ENCODE measurements at regions of chr19 and their contacts with region 1.

Region 1: GRCh38 chr19:44845612-44846454 is at the start of gene NECTIN2:
- DNase-seq: peak; percentile 99 to 100 (median 100)
- ATAC-seq: peak; percentile 83 to 86 (median 86)
- H3K4me3 ChIP-seq: peak within 1 kb of the TSS; percentile 86 to 100 (median 99)
- H3K27ac ChIP-seq: peak within 1 kb of the TSS; percentile 94 to 100 (median 98)
- H3K4me1 ChIP-seq: peaks cover 15 to 56% (median 39%) of the 10 kb centered on the region in 12 donors
- H3K27me3 ChIP-seq: no peaks in the 10 kb centered on the region
- CTCF ChIP-seq: peak; percentile 39 to 86 (median 66)
- POLR2A ChIP-seq: peak; percentile 67 to 92
- total RNA-seq, gene NECTIN2: 37.0 to 99.6 (median 57.6) TPM

Region 2: DNA sequence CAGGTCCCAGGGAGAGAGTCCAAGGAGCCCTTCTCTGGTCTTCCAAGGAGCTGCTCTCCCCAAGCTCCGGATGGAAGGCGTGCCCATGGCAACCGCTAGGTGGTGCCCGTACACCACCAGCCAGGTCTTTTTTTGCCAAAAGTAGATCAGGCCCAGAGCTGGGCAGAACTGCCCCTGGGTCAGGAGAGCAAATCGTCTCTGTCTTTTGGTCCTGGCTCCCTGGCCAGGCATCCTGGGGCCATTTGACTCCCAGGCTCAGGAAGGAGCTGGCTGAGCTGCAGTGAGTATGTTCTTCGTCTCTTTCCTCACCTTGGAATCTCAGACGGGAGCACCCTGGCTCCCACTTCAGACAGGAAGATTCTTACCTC is 121.9 kb before region 1 on chr19:
- intact Hi-C with region 1: loop called in 2 of 10 experiments (anchors 2 to 10 kb)
- DNase-seq: peak; percentile 77 to 91 (median 86)
- ATAC-seq: peak; percentile 75 to 91 (median 90)
- H3K4me3 ChIP-seq: no peak overlapping the region
- H3K27ac ChIP-seq: peak overlapping the region in 6 of 12 donors; percentile 10 to 70 (median 35)
- H3K4me1 ChIP-seq: peaks cover 7 to 60% (median 29%) of the 10 kb centered on the region in 12 donors
- H3K27me3 ChIP-seq: no peaks in the 10 kb centered on the region
- CTCF ChIP-seq: peak; percentile 96 to 100 (median 98)
- POLR2A ChIP-seq: no peak

Region 3: DNA sequence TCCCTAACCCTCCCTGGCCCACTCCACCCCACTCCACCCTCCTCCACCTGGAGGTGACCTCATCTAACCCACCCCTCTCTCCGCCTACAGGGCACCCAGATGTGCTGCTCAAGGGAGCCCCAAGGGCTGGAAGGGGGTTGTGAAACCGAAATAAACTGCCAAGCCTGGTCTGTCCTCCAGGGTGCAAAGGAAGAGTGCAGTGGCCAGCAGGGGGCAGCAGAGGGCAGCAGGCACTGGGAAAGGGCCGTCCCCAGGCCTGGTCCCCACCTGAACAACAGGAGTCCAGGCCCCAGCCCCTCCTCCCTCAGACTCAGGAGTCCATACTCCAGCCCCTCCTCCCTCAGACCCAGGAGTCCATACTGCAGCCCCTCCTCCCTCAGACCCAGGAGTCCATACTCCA is 45.4 kb before region 1 on chr19:
- intact Hi-C with region 1: loop called in 9 of 10 experiments (anchors 1 to 2 kb)
- DNase-seq: peak; percentile 85 to 92 (median 88)
- ATAC-seq: peak; percentile 82 to 90 (median 88)
- H3K4me3 ChIP-seq: no peak overlapping the region
- H3K27ac ChIP-seq: no peak overlapping the region
- H3K4me1 ChIP-seq: peaks cover 0 to 23% (median 14%) of the 10 kb centered on the region in 12 donors
- H3K27me3 ChIP-seq: no peaks in the 10 kb centered on the region
- CTCF ChIP-seq: peak; percentile 86 to 96 (median 91)
- POLR2A ChIP-seq: no peak

Region 4: GRCh38 chr19:44820648-44821609 is 24.9 kb before region 1 on chr19:
- intact Hi-C with region 1: loop called in 1 of 10 experiments (anchors 1 kb)
- DNase-seq: peak; percentile 86 to 89 (median 88)
- ATAC-seq: peak; percentile 77 to 90 (median 86)
- H3K4me3 ChIP-seq: peak overlapping the region in 7 of 12 donors; percentile 20 to 48 (median 34)
- H3K27ac ChIP-seq: peak overlapping the region; percentile 46 to 95 (median 84)
- H3K4me1 ChIP-seq: peaks cover 0 to 37% (median 19%) of the 10 kb centered on the region in 12 donors
- H3K27me3 ChIP-seq: no peaks in the 10 kb centered on the region
- CTCF ChIP-seq: peak in 1 of 12 donors; percentile 20
- POLR2A ChIP-seq: no peak

Region 5: DNA sequence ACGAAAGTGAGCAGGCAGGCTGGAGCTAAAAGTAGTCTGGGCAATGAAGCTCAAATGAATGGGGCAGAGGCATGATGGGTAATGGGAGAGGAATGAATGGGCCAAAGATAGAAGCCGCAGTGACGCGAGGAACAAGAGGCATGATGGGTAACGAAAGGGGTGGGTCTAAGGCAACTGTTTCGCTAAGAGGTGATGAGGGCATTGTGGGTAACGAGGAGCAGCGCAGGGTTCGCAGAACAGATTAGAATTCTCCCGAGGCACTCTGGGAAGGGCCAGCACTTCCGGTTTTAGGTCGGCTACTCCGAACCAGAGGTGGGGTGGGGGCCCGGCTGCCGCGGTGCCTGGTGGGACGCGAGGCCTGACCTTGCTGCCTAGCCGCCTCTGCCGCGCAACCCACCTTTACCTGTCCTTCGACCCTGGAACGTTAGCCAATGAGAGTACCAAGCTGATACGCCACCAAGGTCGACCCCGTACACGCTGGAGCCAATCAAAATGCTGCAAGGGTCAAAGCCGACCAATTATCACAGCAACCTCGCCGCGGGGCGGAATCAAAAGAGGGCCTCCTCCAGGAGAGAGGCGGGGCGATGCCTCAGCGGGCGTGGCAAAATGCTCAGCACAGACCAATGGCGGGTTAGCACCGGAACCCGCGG is 44.7 kb after region 1 on chr19:
- intact Hi-C with region 1: loop called in 6 of 10 experiments (anchors 1 to 5 kb)
- DNase-seq: peak in 3 of 5 donors; percentile 100
- ATAC-seq: peak; percentile 92 to 95 (median 94)
- H3K4me3 ChIP-seq: peak overlapping the region; percentile 28 to 100 (median 73)
- H3K27ac ChIP-seq: peak overlapping the region; percentile 86 to 96 (median 94)
- H3K4me1 ChIP-seq: peaks cover 0 to 31% (median 21%) of the 10 kb centered on the region in 12 donors
- H3K27me3 ChIP-seq: no peaks in the 10 kb centered on the region
- CTCF ChIP-seq: no peak
- POLR2A ChIP-seq: peak in 1 of 2 donors; percentile 69